ENCODE measurements at regions of chr18 and their contacts with region 1.

Region 1: GRCh38 chr18:499551-500408 is 721 bp downstream of the COLEC12 start:
- DNase-seq: no peak
- ATAC-seq: no peak
- H3K4me3 Mint-ChIP-seq: no peak overlapping the region
- H3K27ac Mint-ChIP-seq: no peak overlapping the region
- H3K4me1 Mint-ChIP-seq: peaks cover 5% of the 10 kb centered on the region
- H3K27me3 Mint-ChIP-seq: peaks cover 44% of the 10 kb centered on the region

Region 2: DNA sequence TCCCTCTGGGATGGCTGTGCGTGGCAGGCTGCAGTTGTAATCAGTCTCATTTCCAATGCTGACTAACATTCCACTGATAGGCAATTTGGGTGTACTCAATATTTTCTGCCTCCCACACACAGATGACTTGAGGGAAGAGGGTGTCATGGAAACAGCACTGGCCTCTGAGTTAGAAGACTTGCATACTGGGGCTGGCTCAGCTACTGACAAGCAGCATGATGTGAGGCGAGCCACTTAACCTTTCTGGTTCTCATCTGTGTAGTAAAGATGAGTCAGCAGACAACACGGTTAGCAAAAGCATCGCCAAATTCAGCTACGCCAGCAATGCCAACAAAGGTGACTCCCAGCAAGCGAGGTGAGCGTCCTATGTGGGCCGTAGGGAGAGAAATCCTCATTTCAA is 72.8 kb before region 1 on chr18:
- CTCF ChIA-PET with region 1: no interaction called
- POLR2A ChIA-PET with region 1: no interaction called
- intact Hi-C with region 1: no loop called
- DNase-seq: peak; percentile 18
- ATAC-seq: peak; percentile 64
- H3K4me3 Mint-ChIP-seq: no peak overlapping the region
- H3K27ac Mint-ChIP-seq: no peak overlapping the region
- H3K4me1 Mint-ChIP-seq: no peaks in the 10 kb centered on the region
- H3K27me3 Mint-ChIP-seq: peaks cover 3% of the 10 kb centered on the region

Region 3: DNA sequence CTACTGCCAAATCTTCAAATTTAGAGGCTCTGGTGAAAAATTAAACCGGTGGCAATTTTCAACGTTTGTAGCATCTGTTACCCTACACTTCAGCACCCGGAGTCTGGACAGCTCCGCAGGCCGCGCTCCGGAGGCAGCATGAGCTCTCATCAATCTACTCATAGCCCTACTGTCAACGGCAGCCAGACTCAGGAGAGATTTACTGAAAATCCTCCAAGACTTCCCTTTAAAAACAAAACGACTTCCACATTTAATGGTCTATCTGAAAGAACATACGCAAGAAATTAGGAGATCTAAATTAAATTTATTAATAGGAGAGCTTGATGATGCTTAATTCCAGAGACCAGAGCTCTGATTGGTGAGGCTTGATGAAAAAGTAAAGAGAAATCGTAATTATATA is 403.9 kb after region 1 on chr18:
- CTCF ChIA-PET with region 1: no interaction called
- POLR2A ChIA-PET with region 1: no interaction called
- intact Hi-C with region 1: loop called in 1 of 2 experiments (anchors 5 kb)
- DNase-seq: peak; percentile 79
- ATAC-seq: no peak
- H3K4me3 Mint-ChIP-seq: no peak overlapping the region
- H3K27ac Mint-ChIP-seq: no peak overlapping the region
- H3K4me1 Mint-ChIP-seq: peaks cover 18% of the 10 kb centered on the region
- H3K27me3 Mint-ChIP-seq: peaks cover 60% of the 10 kb centered on the region

Measured in activated CD4-positive, alpha-beta T cell treated with anti-CD3 and anti-CD28 coated beads for 36 hours (primary cell).